ENCODE measurements at regions of chr16 and their contacts with region 1.

Region 1: DNA sequence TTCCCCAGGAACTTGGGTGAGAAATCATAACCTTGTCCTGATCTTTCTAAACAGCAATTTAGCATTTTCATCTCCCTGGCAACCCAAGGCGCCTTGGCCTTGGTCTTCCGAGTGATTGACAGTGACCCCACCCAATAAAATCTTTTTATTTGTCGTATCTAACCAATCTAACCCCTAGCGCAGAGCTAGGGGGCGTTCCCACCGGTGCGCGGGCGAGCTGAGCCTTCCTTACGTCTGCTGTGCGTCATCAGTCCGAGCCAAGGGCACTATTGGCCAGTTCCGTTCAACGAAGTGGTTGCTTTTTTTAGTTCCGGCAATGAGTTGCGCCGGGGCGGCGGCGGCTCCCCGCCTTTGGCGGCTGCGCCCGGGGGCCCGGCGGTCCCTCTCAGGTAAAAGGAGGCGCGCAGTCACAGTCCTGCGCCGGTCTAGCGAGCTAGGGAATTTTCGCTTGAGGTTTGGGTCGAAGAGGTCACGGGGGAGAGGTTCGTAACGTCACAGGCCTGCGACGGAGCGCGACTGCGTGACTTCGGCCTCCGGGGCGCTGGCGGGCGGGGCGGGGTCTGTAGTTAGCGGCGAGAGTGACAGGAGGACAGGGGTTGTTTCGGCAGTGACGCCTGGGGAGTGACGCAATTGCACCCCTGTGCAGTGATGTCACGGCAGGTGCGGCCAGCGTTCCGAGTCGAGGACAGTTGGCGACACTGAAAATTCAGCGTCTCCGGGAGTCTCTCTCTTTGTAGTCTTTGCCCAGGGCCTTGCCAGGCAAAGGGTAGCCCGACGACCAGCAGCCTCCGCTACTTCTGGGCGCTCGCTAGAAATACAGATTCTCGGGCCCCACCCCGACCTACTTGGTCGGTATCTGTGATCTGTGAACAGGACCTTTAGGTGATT is at the start of gene COQ7:
- DNase-seq: peak; percentile 99
- ATAC-seq: peak; percentile 98
- total RNA-seq, gene COQ7: 40.4 TPM

Region 2: DNA sequence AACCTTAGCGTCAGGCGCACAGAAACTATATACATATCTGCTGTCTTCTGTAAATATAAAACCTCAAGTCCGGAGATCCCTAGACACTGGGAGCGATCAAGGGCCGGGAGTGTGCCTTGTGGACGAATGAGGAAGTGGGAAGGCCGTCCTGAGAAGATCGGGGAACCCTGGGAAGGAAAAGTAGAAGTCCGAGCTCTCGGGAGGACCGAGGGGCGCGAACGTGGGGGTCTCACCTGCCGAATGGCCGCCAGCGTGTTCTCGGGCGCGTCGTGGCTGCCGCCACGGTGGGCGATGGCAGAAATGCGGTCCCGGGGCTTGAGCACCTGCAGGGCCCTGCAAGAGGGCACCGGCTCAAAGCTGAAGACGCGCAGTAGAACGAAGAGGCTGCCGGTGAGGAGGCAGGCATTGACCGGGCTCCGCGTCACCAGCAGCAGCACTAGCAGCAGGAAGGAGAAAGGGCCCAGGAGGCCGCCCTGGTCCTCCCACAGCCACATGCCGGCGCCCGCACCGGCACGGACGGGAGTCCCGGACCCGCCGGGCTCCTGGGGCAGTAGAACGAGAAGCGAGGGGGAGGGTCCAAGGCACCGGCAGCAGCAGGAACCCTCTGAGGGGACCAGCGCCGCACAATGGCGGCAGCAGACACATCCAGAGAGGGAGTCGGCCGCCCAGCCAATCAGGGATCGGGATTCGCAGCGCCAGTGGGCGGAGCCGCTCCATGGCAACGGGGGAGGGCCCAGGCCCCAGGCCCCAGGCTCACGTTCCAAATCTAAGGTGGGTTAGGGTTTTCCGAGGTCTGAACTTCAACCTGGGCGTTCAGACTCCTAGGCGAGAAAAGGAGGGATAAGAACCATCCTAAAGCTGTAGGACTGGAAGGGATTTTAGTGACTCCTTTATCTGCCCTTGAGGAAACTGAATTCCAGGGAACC is 454.1 kb after region 1 on chr16 and contains the start of gene GDE1:
- intact Hi-C with region 1: loop called (anchors 5 kb)
- DNase-seq: peak; percentile 98
- ATAC-seq: peak; percentile 91
- total RNA-seq, gene GDE1: 110 TPM

Region 3: DNA sequence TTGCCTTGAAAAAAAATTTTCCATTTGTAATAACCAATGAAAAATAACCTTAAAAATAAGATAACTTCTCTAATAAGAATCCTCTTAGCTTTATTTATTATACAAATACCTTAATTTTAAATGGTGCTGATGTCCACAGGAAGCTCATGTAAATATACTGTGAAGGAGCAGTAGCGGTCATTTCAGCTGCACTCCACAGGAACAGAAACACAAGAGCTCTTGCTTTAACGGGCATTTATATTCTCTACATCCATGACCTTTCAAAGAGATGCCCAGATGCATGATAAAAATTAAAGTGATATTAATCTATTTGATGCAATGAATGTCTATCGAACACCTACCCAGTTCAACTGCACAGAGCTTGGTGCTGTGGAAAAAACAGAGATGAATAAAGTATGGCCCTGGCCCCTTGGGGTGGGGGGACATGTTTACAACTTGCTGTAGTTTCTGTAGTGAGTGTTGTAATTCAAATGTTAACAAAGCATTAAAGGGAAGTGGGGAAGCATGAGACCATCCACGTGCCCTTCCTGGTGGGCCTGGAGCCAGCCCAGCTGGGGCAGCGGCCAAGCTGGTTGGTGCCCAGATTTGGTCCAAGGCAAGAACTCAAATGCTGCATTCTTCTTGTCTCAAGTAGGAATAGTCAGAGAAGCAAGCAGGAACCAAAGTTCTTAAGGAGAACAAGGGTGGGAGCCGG is 698.4 kb after region 1 on chr16:
- intact Hi-C with region 1: no loop called
- DNase-seq: peak; percentile 77
- ATAC-seq: peak; percentile 60